GM12878 (cell line): ENCODE measurements at regions of chr6 and their contacts with region 1.

Region 1: DNA sequence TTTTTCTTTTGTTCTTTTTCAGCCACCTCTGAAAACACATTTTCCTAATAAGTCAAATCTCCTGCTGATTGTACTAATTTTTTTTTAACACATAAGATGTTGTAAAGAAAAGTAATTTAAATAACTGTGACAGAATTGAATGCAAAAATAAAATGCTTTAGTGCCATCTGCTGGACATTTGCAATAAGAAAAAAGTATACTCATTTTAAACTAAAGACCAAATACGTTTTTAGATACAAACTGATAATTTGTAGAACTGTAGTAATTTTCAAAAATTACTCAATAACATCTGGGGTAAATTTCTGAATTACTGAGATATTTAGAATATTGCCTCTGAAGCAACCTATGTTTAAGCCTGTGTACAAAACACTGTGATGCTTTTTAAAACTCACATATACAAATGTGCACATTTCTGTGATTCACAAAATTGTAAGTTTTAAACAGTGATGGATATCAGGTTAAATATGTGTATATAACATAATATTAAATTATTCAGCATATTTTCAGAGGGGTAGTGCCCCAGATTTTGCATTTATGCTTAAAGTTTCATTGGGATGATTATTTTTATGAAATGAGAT is 198.7 kb downstream of the RIMS1 start:
- DNase-seq: no peak
- ATAC-seq: no peak
- H3K4me3 ChIP-seq: no peak overlapping the region
- H3K27ac ChIP-seq: no peak overlapping the region
- H3K4me1 ChIP-seq: no peaks in the 10 kb centered on the region
- H3K27me3 ChIP-seq: no peaks in the 10 kb centered on the region; a peak in 1 of 4 replicates
- CTCF ChIP-seq: peak; percentile 14 to 49 (median 40); a peak in 2 of 6 replicates
- EP300 ChIP-seq: no peak
- POLR2A ChIP-seq: no peak
- RAD21 ChIP-seq: peak; percentile 46

Region 2: GRCh38 chr6:71383901-71384489 is 701.1 kb before region 1 on chr6:
- CTCF ChIA-PET with region 1: interaction called, 5 read pairs
- POLR2A ChIA-PET with region 1: no interaction called
- RAD21 ChIA-PET with region 1: no interaction called
- SMC1A ChIA-PET with region 1: no interaction called
- in situ Hi-C with region 1: loop called (anchors 10 kb)
- intact Hi-C with region 1: loop called (anchors 1 kb)
- DNase-seq: no peak
- ATAC-seq: no peak
- H3K4me3 ChIP-seq: no peak overlapping the region
- H3K27ac ChIP-seq: no peak overlapping the region
- H3K4me1 ChIP-seq: no peaks in the 10 kb centered on the region
- H3K27me3 ChIP-seq: no peaks in the 10 kb centered on the region
- CTCF ChIP-seq: peak; percentile 29 to 59 (median 38); a peak in 5 of 6 replicates
- EP300 ChIP-seq: no peak
- POLR2A ChIP-seq: no peak
- RAD21 ChIP-seq: peak; percentile 81

Region 3: GRCh38 chr6:71533939-71534379 is 551.1 kb before region 1 on chr6:
- CTCF ChIA-PET with region 1: interaction called, 19 read pairs
- POLR2A ChIA-PET with region 1: no interaction called
- RAD21 ChIA-PET with region 1: interaction called, 3 read pairs
- SMC1A ChIA-PET with region 1: interaction called, 6 read pairs
- in situ Hi-C with region 1: loop called (anchors 5 kb)
- intact Hi-C with region 1: loop called (anchors 1 kb)
- DNase-seq: no peak
- ATAC-seq: no peak
- H3K4me3 ChIP-seq: no peak overlapping the region
- H3K27ac ChIP-seq: no peak overlapping the region
- H3K4me1 ChIP-seq: no peaks in the 10 kb centered on the region
- H3K27me3 ChIP-seq: no peaks in the 10 kb centered on the region; a peak in 1 of 4 replicates
- CTCF ChIP-seq: peak; percentile 45 to 49 (median 49)
- EP300 ChIP-seq: no peak
- POLR2A ChIP-seq: no peak
- RAD21 ChIP-seq: peak; percentile 53

Region 4: GRCh38 chr6:71556141-71556540 is 528.9 kb before region 1 on chr6:
- CTCF ChIA-PET with region 1: no interaction called
- POLR2A ChIA-PET with region 1: no interaction called
- RAD21 ChIA-PET with region 1: no interaction called
- SMC1A ChIA-PET with region 1: no interaction called
- in situ Hi-C with region 1: no loop called
- intact Hi-C with region 1: no loop called
- DNase-seq: no peak
- ATAC-seq: no peak
- H3K4me3 ChIP-seq: no peak overlapping the region
- H3K27ac ChIP-seq: no peak overlapping the region
- H3K4me1 ChIP-seq: no peaks in the 10 kb centered on the region
- H3K27me3 ChIP-seq: no peaks in the 10 kb centered on the region
- CTCF ChIP-seq: no peak
- EP300 ChIP-seq: no peak
- POLR2A ChIP-seq: no peak
- RAD21 ChIP-seq: no peak

Region 5: DNA sequence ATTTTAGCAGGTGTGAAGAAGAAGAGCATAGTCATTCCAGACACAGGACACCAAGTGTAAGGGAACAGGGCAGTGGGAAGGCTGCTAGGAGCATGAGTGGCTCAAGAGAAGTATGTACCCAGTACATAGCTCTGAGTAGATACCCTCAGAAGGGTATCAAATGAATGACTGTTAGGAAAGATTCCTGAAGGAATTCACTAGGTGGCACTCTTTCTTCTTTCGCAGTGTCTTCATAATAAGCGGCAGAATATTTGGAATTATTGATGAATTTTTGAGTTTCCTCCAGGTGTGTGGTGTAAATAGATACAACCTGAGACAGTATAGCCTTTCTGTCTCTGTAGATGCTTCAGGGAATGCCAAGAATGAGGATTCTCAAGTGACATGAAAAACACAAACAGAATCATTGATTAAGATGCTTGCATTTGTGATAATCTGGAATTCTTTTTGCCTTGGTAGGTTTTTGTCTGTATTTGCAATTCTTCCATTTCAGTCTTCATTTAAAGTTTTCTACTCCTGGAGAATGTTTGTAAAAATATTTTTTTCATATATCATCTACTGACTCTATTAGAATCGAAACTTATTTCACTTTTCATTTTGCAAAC is 463.1 kb before region 1 on chr6:
- CTCF ChIA-PET with region 1: interaction called, 4 read pairs
- POLR2A ChIA-PET with region 1: no interaction called
- RAD21 ChIA-PET with region 1: no interaction called
- SMC1A ChIA-PET with region 1: interaction called, 5 read pairs
- in situ Hi-C with region 1: loop called (anchors 10 kb)
- intact Hi-C with region 1: loop called (anchors 5 kb)
- DNase-seq: no peak
- ATAC-seq: no peak
- H3K4me3 ChIP-seq: no peak overlapping the region
- H3K27ac ChIP-seq: no peak overlapping the region
- H3K4me1 ChIP-seq: no peaks in the 10 kb centered on the region
- H3K27me3 ChIP-seq: no peaks in the 10 kb centered on the region
- CTCF ChIP-seq: peak in 2 of 3 experiments; percentile 18 to 22; a peak in 2 of 6 replicates
- EP300 ChIP-seq: no peak
- POLR2A ChIP-seq: no peak
- RAD21 ChIP-seq: peak; percentile 35; the same call in 1 of the 2 replicates

Region 6: DNA sequence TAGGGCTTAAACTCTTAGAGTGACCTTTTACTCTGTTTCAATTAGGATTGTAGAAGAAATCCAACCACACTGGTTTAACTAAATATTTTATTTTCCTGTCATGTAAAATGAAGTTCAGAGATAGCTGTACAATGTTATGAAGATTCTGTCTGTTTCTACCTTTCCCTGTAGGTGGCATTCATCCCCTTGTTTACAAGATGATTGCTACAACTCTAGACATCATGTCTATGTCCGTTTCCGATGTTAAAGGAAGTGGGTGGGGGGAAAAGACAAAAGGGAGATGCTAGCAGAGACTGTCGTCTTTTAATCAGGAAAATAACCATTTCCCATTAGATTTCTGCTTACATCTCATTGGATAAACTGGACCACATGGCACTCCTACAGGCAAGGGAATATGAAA is 229.7 kb before region 1 on chr6:
- CTCF ChIA-PET with region 1: interaction called, 4 read pairs
- POLR2A ChIA-PET with region 1: no interaction called
- RAD21 ChIA-PET with region 1: no interaction called
- SMC1A ChIA-PET with region 1: no interaction called
- in situ Hi-C with region 1: no loop called
- intact Hi-C with region 1: loop called (anchors 1 kb)
- DNase-seq: no peak
- ATAC-seq: peak; percentile 66
- H3K4me3 ChIP-seq: no peak overlapping the region
- H3K27ac ChIP-seq: no peak overlapping the region
- H3K4me1 ChIP-seq: no peaks in the 10 kb centered on the region
- H3K27me3 ChIP-seq: no peaks in the 10 kb centered on the region; a peak in 1 of 4 replicates
- CTCF ChIP-seq: peak in 2 of 3 experiments; percentile 4 to 13; a peak in 1 of 6 replicates
- EP300 ChIP-seq: no peak
- POLR2A ChIP-seq: no peak
- RAD21 ChIP-seq: peak; percentile 59